Caco-2 (cell line): ENCODE measurements at regions of chr1 and their contacts with region 1.

Region 1: DNA sequence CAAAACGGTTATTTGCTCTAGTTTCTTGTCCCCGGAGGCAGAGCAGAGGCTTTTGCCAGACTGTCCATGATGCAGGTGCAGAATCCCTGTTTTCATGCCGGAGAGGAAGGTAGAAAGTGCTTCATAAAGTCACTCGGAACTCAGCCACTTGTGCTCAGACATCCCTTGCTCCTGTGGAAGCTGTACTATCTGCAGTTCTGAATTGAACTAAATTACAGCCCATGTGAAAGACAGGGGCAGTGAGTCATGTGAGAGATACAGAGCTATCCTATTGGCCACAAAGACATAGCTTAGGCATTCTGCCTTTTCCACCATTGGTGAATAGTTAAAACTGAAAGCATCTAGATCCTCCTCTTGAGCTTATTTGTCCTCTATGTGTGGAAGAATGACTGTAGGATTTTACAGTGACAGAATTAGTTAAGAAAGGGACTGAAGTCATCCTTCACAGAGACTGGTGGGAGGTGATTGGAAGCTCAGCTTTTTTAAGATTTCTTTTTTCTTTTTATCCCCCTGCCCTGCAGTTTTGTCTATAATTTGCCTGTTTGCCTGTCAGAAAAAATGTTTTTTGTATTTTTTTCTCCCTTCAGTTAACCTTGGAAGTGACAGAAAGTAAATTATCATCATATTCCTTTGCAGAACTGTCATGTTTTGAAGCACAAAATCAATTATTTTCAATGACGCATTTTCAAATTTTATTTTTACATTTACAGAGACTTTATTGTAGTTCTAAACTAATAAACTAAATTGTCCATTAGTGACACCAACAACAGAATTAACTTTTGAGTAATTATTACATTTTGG is 298.6 kb downstream of the PTPRC start:
- DNase-seq: peak; percentile 60 to 69
- H3K4me3 ChIP-seq: peak overlapping the region; percentile 52
- H3K4me3 Mint-ChIP-seq: no peak overlapping the region
- H3K27ac Mint-ChIP-seq: peak overlapping the region; percentile 11
- H3K4me1 ChIP-seq: peaks cover 29% of the 10 kb centered on the region
- H3K4me1 Mint-ChIP-seq: peaks cover 13% of the 10 kb centered on the region
- H3K27me3 ChIP-seq: no peaks in the 10 kb centered on the region
- H3K27me3 Mint-ChIP-seq: no peaks in the 10 kb centered on the region
- CTCF ChIP-seq: no peak

Region 2: GRCh38 chr1:198780376-198780775 is 157.1 kb before region 1 on chr1:
- CTCF ChIA-PET with region 1: no interaction called
- POLR2A ChIA-PET with region 1: no interaction called
- intact Hi-C with region 1: loop called (anchors 2 kb)
- DNase-seq: no peak
- H3K4me3 ChIP-seq: no peak overlapping the region
- H3K4me3 Mint-ChIP-seq: no peak overlapping the region
- H3K27ac Mint-ChIP-seq: no peak overlapping the region
- H3K4me1 ChIP-seq: peaks cover 19% of the 10 kb centered on the region; the same call in 1 of the 2 replicates
- H3K4me1 Mint-ChIP-seq: no peaks in the 10 kb centered on the region
- H3K27me3 ChIP-seq: no peaks in the 10 kb centered on the region
- H3K27me3 Mint-ChIP-seq: no peaks in the 10 kb centered on the region
- CTCF ChIP-seq: no peak

Region 3: GRCh38 chr1:198856601-198857000 is 80.8 kb before region 1 on chr1:
- CTCF ChIA-PET with region 1: no interaction called
- POLR2A ChIA-PET with region 1: no interaction called
- intact Hi-C with region 1: loop called (anchors 2 kb)
- DNase-seq: peak; percentile 51 to 65
- H3K4me3 ChIP-seq: no peak overlapping the region
- H3K4me3 Mint-ChIP-seq: no peak overlapping the region
- H3K27ac Mint-ChIP-seq: peak overlapping the region; percentile 14
- H3K4me1 ChIP-seq: peaks cover 22% of the 10 kb centered on the region
- H3K4me1 Mint-ChIP-seq: peaks cover 17% of the 10 kb centered on the region
- H3K27me3 ChIP-seq: no peaks in the 10 kb centered on the region
- H3K27me3 Mint-ChIP-seq: no peaks in the 10 kb centered on the region
- CTCF ChIP-seq: no peak

Region 4: DNA sequence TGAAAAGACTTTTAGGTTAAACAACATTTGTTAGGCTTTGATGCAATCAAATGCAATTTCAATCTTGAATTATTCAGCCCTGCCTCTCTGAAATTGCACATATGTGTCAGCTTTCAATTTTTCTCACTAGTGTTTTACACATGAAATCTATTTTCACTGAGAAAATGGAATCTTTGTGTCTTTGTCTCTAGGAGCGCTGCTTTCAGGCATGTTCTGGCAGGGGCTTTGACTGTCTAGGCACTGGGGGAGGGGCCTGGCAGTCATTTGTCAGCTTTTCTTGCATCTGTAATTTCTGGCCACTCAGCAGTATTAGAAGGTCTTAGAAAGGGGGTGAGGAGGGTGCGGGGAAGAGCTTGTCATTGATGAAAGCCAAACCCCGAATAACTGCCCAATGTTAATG is 34.2 kb before region 1 on chr1:
- CTCF ChIA-PET with region 1: no interaction called
- POLR2A ChIA-PET with region 1: no interaction called
- intact Hi-C with region 1: no loop called
- DNase-seq: no peak
- H3K4me3 ChIP-seq: no peak overlapping the region
- H3K4me3 Mint-ChIP-seq: no peak overlapping the region
- H3K27ac Mint-ChIP-seq: no peak overlapping the region
- H3K4me1 ChIP-seq: no peaks in the 10 kb centered on the region
- H3K4me1 Mint-ChIP-seq: no peaks in the 10 kb centered on the region
- H3K27me3 ChIP-seq: no peaks in the 10 kb centered on the region
- H3K27me3 Mint-ChIP-seq: no peaks in the 10 kb centered on the region
- CTCF ChIP-seq: no peak